Psoas muscle (tissue), 8 donors: ENCODE measurements at regions of chr1 and their contacts with region 1.

Region 1: GRCh38 chr1:1033009-1033587 is 13.2 kb downstream of the AGRN start:
- DNase-seq: peak; percentile 79 to 89
- ATAC-seq: peak; percentile 84 to 96 (median 92)
- H3K4me3 ChIP-seq: peak overlapping the region; percentile 65
- H3K27ac ChIP-seq: no peak overlapping the region
- H3K4me1 ChIP-seq: peaks cover 11% of the 10 kb centered on the region
- H3K27me3 ChIP-seq: peaks cover 0 to 59% (median 9%) of the 10 kb centered on the region in 3 donors
- CTCF ChIP-seq: peak; percentile 51

Region 2: DNA sequence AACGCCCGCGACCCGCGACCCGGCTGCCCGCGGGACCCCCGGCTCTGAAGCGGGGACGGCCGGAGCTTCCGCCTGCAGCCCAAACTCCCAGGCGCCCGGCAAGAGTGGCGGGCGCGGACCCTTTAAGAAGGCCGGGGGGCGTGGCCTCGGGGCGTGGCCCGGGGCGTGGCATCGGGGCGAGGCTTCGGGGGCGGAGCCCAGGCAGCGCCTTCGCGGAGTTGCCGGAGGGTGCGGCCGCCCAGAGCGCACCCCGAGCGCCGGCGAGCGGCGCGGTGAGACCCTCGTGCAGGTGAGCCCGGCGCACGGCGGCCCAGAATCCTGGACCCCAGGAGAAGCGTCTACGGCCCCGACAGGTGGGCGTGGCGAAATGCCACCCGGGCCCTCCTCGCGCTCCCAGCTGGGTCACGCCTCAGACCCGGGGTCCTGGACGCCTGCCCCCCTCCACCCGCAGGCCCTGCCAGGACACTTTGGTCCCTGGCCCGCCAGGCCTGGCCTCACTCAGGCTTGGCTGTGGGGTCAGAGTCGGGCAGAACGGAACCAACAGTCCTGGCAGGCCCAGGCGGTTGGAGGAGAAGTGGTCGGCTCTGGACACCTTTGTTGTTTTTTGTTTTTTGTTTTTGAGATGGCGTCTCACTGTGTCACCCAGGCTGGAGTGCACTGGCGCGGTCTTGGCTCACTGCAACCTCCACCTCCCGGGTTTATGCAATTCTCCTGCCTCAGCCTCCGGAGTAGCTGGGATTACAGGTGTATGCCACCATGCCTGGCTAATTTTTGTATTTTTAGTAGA is 26.6 kb after region 1 on chr1:
- intact Hi-C with region 1: loop called in 1 of 2 experiments (anchors 2 kb)
- DNase-seq: peak; percentile 89 to 94
- ATAC-seq: peak; percentile 90 to 97 (median 94)
- H3K4me3 ChIP-seq: peak overlapping the region; percentile 72
- H3K27ac ChIP-seq: no peak overlapping the region
- H3K4me1 ChIP-seq: no peaks in the 10 kb centered on the region
- H3K27me3 ChIP-seq: peaks cover 0 to 74% (median 34%) of the 10 kb centered on the region in 3 donors
- CTCF ChIP-seq: no peak

Region 3: DNA sequence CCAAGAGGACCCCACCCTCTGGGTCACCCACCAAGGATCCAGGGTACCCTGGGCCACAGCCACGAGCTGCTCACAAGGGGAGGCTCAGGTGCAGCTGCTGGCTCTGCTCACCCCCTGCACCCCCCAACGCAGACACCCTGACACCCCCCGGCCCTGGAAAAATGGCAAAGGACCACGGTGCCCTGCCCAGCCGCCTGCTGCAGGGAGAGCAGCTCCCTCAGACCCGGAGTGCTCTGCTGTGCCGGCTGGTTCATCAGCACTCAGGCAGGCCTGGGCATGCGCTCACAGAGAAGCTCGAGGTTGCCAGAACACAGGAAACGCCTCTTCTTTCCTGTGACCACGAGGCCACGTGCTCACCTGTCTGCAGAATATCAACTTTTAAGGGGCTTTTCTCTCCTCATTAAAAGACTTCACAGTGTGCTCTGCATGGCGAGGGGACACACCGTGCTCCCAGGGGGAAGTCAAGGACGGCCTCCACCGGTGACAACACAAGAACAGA is 217.7 kb after region 1 on chr1:
- intact Hi-C with region 1: loop called in 1 of 2 experiments (anchors 10 kb)
- DNase-seq: peak in 1 of 2 donors; percentile 14
- ATAC-seq: no peak
- H3K4me3 ChIP-seq: no peak overlapping the region
- H3K27ac ChIP-seq: no peak overlapping the region
- H3K4me1 ChIP-seq: no peaks in the 10 kb centered on the region
- H3K27me3 ChIP-seq: peaks cover 0 to 15% (median 12%) of the 10 kb centered on the region in 3 donors
- CTCF ChIP-seq: no peak

Region 4: GRCh38 chr1:1273512-1274298 is 240.6 kb after region 1 on chr1 and contains the start of gene UBE2J2:
- intact Hi-C with region 1: loop called in 1 of 2 experiments (anchors 10 kb)
- DNase-seq: peak; percentile 94 to 98
- ATAC-seq: peak; percentile 97 to 98 (median 98)
- H3K4me3 ChIP-seq: peak within 1 kb of the TSS; percentile 71
- H3K27ac ChIP-seq: peak within 1 kb of the TSS; percentile 88
- H3K4me1 ChIP-seq: peaks cover 45% of the 10 kb centered on the region
- H3K27me3 ChIP-seq: no peaks in the 10 kb centered on the region
- CTCF ChIP-seq: no peak
- total RNA-seq, gene UBE2J2: 36.8 to 48.1 (median 42.4) TPM

Region 5: DNA sequence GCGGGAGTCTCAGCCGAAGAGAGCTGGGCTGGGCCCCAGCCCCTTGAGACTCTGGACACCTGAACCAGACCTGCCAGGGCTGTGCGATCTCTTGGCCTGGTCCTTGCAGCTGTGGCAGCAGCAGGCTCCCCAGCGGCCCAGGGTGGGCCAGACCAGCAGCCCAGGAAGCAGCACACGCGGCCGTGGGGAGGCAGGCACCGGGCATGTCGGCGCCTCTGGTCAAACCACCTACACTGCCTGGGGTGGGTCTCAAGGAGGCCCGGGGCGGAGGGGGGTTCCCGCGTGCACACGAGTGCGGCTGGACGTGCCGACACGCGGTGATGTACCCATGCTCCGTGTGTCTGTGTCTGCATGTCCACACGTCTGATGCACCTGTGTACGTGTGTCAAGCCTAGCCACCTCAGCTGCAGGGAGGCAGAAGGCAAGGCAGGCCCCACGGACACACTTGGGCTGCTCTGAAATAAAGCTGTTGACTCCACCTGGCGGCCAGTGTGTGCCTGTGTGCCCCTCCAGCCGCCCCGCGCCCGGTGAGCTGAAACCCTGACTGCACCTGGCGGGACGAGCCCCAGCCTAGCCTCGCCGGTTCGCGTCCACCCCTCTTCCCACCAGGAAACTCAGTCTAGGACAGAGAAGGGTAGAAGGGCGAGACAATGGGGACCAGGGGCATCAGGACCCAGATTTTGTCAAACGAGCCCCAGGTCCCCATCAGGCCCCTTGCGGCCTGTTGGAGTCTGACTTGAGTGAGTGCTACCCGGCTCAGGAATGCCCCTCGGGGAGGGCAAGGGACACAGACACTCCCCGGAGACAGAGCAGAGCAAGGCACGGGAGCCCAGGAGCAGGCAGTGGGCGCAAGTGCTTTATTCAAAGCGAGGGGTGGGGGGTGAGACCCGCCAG is 258.7 kb after region 1 on chr1:
- intact Hi-C with region 1: loop called in 1 of 2 experiments (anchors 5 kb)
- DNase-seq: peak; percentile 58 to 84
- ATAC-seq: peak; percentile 61 to 87 (median 74)
- H3K4me3 ChIP-seq: no peak overlapping the region
- H3K27ac ChIP-seq: no peak overlapping the region
- H3K4me1 ChIP-seq: no peaks in the 10 kb centered on the region
- H3K27me3 ChIP-seq: peaks cover 0 to 10% (median 0%) of the 10 kb centered on the region in 3 donors
- CTCF ChIP-seq: peak; percentile 61